Activated naive CD4-positive, alpha-beta T cell treated with anti-CD3 and anti-CD28 coated beads, Interleukin-2, amount 10 ng/mL, durations not matched to agents 7 days and 5 days (primary cell): ENCODE measurements at regions of chr17 and their contacts with region 1.

Region 1: DNA sequence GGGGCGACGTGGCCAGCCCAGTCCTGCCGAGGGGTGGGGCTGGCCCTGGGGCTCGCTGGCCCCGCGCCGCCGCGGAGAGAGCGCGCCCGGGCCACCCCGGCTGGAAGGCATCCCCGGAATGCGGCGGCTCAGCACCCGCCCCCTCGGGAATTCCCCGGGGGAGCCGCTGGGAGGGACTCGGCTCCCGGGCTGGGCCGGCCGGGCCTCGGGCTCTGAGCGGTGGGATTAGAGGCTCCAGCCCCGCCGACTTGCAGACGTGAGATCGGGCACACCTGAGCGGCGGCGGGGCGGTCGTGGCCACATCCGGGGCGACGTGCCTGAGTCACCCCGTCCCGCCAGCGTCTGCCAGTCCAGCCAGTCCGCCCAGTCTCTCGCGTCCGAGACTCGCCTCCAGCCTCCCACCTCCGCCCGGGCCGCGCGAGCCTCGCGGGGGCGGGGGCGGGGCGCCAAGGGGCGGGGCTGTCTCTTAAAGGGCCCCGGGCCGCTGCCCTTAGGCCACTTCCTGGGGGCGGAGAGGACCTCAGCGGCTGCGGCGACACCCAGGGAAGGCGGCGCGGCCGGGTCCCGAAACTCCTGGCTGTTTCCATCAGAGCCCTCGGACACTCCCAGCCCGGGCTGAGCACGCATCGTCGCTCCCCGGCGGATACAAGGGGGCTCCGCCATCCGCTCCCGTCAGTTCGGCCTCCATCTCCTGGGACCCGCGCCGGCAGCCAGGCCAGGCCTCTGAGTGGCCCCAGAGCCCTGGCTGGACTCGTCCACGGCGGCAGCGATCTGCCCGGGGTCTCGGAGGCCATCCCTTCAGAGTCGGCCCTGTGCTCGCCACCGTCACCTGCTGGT is at the start of gene KCTD11:
- DNase-seq: peak; percentile 83
- H3K4me3 Mint-ChIP-seq: peak within 1 kb of the TSS; percentile 74
- H3K27ac Mint-ChIP-seq: peak within 1 kb of the TSS; percentile 76
- H3K4me1 Mint-ChIP-seq: peaks cover 68% of the 10 kb centered on the region
- H3K27me3 Mint-ChIP-seq: peaks cover 14% of the 10 kb centered on the region

Region 2: DNA sequence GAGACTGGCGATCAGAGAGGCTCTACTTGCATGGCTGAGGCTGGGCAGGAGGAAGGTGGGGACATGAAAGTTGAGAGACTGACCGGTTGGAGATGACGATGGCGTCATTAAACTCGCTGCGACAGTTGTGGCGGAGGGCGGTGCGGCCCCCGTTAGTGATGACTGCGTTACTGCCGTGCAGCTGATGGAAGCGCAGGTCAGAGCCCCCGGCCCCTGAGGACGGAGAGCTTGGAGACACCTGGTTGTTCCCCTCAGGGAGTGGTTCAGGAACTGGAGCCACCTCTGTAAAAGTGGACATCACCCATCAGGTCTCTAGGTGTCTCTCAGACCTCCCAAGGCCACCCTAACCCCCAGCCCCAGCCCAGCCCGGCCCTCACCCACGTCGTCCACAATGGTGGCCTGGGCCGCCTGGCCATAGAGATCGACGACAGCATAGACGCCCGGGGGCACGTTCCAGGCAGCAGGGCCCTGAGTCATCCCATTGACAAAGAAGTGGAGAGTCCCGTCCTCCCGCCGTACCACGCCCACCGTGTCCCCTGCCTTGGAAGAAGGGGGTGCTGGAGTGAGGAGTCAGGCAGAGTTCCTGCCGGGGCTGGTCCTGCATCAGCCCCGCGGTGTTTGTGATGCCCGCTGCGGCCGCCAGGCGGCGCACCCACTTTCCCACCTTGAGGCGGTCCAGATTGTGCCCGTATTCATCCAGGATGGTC is 28.0 kb before region 1 on chr17:
- CTCF ChIA-PET with region 1: interaction called, 29 read pairs
- DNase-seq: peak; percentile 76
- H3K4me3 Mint-ChIP-seq: no peak overlapping the region
- H3K27ac Mint-ChIP-seq: no peak overlapping the region
- H3K4me1 Mint-ChIP-seq: peaks cover 24% of the 10 kb centered on the region
- H3K27me3 Mint-ChIP-seq: no peaks in the 10 kb centered on the region

Region 3: DNA sequence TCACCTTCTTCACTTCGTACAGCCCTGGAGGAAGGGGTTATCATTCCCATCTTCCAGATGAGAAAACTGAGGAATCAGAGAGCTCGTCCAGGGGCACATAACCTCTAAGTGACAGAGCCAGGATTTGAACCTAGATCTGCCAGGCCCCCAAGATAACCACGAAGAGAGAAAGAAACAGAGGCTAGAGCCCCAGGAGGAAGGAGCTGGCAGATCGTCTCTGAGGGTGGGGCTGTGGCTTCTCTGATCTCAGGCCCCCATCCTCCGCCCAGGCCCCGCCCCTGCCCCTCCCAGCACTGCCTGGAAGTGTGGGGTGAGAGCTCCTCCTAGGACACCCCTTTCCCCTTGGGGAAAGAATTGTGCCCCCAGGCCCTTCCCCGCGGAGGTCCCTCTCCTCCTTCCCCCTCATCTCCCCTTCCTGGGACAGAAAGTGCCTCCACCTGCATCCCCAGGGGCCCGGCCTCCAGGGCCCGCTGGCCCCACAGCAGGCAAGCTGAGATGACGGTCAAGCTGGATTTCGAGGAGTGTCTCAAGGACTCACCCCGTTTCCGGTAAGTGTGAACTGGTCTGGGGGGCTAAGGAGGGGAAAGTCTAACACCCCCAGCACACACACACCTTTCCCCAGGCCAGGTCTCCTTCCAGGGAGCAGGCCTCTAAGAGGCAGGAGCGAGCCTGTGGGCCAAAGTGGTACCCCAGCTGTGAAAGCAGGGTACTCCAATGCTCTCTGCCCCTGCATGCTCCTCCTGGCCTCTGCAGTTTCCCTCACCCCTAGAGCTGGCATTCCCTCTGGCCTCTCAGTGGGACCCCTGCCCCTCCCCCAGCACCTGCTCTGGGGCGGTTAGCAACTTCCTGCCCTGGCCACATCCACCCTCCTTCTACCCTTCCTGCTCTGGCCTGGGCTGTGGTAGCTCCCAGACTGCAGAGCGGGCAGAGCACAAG is 15.4 kb before region 1 on chr17 and contains the start of gene ACAP1:
- CTCF ChIA-PET with region 1: interaction called, 29 read pairs
- DNase-seq: peak; percentile 95
- H3K4me3 Mint-ChIP-seq: peak within 1 kb of the TSS; percentile 88
- H3K27ac Mint-ChIP-seq: peak within 1 kb of the TSS; percentile 95
- H3K4me1 Mint-ChIP-seq: peaks cover 72% of the 10 kb centered on the region
- H3K27me3 Mint-ChIP-seq: no peaks in the 10 kb centered on the region

Region 4: DNA sequence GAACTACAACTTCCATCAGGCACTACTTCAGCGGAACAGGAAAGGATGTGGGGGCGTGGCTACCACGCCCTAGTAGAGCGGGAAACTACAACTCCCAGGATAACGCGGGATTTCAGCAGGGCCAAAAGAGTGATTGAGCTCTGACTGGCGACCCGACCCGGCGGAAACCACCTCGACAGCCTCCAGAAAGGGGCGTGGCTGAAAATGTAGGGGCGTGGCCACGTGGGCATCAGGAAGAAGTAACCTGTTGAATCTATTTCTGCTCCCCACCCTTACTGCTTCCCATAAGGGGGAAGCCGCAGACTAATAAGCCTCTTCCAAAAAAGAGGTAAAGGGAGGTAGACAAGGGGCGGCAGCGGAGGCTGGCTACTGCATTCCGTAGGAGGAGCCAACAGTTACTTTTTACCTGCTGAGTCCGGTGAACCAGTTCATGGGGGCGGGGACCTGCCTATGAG is 83.4 kb after region 1 on chr17 and contains the start of gene TMEM102:
- CTCF ChIA-PET with region 1: interaction called, 56 read pairs
- DNase-seq: peak; percentile 99
- H3K4me3 Mint-ChIP-seq: peak within 1 kb of the TSS; percentile 94
- H3K27ac Mint-ChIP-seq: peak within 1 kb of the TSS; percentile 97
- H3K4me1 Mint-ChIP-seq: peaks cover 44% of the 10 kb centered on the region
- H3K27me3 Mint-ChIP-seq: peaks cover 27% of the 10 kb centered on the region

Region 5: DNA sequence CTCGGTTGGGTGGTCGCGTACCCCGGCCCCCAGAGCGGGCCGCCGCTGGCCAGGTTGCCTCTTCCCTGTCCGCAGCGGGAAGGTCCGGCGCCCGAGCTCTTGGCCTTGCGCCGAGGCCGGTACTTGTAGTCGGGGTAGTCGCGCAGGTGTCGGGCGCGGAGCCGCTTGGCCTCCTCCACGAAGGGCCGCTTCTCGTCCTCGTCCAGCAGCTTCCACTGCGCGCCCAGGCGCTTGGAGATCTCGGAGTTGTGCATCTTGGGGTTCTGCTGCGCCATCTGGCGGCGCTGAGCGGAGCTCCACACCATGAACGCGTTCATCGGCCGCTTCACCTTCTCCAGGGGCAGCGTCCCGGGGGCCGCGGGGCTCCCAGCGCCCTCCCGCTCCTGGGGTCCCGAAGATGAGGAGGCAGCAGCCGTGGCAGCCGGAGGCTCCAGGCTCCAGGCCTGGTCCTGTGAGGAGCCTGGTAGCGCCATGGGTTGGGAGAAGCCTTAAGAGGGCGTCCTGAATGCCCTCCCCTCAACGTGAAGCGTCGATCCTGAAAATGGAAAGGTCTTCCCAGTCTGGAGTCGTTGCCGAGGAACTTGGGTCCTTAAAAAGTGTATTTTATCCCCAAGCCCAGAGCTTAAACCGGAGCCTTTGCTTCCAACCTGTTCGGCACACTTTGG is 237.5 kb after region 1 on chr17:
- CTCF ChIA-PET with region 1: interaction called, 13 read pairs
- DNase-seq: peak; percentile 80
- H3K4me3 Mint-ChIP-seq: no peak overlapping the region
- H3K27ac Mint-ChIP-seq: no peak overlapping the region
- H3K4me1 Mint-ChIP-seq: peaks cover 22% of the 10 kb centered on the region
- H3K27me3 Mint-ChIP-seq: no peaks in the 10 kb centered on the region